Aorta (tissue), 5 donors: ENCODE measurements at regions of chrX and their contacts with region 1.

Region 1: DNA sequence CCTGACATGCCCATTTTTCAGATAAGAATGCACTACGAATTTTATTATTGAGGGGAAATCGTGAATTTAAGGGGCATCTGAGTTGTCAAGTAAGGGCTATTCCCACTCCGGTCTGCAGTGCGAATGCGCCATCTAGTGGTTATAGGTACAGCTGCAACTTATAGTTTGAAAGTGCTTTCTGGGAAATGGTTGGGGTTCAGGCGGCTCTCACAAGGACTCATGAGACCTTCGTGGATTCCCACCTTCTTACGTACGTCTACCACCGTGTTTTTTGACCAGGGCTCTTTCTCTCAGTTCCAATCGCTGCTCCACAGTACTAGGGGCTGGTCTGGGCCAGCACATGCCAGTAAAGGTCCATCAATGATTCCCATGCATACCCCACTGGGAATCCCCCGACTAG is 12.3 kb downstream of the MSL3 start:
- DNase-seq: no peak
- ATAC-seq: peak; percentile 68
- H3K4me3 ChIP-seq: no peak overlapping the region
- H3K27ac ChIP-seq: no peak overlapping the region
- H3K4me1 ChIP-seq: no peaks in the 10 kb centered on the region
- H3K27me3 ChIP-seq: no peaks in the 10 kb centered on the region

Region 2: DNA sequence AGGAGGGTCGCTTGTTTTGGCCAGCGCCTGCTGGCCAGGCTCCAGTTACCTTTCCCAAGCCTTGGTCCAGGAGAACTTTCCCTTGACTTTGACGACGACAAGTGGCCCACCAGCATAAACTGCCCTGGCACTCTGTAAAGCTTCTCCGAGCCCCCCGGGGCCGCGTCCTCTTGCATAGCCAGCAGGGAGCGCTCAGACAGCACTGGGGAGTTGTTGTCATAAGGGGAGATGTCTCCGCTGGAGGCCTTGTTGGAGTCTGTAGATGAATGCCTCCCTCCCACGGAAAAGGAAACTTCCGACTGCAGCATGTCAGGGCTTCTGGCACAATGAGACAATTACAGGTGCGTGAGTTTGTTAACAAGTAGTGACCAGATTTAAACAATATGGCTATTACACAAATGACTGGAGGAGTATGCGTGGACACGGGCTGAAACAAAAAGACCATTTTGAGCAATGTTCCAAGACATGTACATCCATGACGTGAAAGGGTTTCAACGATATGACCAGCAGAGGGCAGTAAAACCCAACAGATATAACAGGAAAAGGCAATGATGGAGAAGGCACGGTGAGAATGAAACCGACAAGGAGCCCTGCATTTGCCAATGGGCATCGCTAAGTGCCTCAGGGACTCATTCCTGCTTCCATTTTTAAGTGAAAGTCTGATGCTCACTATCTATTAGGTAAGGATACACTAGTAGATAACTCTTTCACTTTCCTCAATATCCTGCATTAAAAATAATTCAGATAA is 626.2 kb before region 1 on chrX:
- intact Hi-C with region 1: loop called (anchors 5 to 10 kb)
- DNase-seq: no peak
- ATAC-seq: peak; percentile 76
- H3K4me3 ChIP-seq: no peak overlapping the region
- H3K27ac ChIP-seq: no peak overlapping the region
- H3K4me1 ChIP-seq: no peaks in the 10 kb centered on the region
- H3K27me3 ChIP-seq: no peaks in the 10 kb centered on the region

Region 3: DNA sequence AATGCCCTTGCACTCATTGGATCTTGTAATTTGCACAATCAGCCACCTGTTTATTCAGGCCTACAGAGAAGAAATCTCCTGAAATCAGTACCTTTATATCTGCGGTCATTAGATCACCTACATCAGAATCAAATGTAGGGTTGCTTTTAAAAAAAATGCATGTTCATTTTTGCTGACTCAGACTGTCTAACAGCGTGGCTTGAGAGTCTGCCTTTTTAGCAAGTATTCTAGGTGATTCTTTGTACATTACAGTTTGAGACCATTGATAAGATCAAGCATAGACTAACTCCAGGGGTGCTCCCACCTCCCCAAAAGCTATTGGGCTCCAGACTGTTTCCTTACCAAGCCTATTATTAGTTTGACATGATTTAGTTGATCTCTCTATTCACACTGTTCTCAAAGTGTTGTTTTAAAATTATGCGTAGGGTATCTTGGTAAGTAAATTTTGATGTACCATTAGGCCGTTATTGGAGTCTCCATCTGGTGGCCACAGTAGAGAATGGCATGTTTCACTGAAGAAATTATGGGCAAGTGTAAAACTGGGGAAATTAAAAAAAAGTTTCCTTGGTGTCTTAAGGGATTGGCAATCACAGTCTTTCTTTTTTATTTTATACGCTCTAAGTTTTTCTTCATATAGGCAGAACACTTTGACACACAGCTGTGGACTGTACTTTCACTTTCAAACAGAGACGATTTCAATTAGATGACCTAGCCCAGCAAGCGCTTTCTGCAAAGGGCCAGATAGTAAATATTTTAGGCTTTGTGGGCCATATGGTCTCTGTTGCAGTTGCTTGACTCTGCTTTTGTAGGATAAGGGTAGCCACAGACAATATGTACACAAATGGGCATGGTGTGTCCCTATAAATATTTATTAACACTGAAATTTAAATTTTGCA is 46.0 kb before region 1 on chrX:
- intact Hi-C with region 1: loop called in 1 of 2 experiments (anchors 5 kb)
- DNase-seq: no peak
- ATAC-seq: peak; percentile 69
- H3K4me3 ChIP-seq: no peak overlapping the region
- H3K27ac ChIP-seq: no peak overlapping the region
- H3K4me1 ChIP-seq: no peaks in the 10 kb centered on the region
- H3K27me3 ChIP-seq: no peaks in the 10 kb centered on the region

Region 4: DNA sequence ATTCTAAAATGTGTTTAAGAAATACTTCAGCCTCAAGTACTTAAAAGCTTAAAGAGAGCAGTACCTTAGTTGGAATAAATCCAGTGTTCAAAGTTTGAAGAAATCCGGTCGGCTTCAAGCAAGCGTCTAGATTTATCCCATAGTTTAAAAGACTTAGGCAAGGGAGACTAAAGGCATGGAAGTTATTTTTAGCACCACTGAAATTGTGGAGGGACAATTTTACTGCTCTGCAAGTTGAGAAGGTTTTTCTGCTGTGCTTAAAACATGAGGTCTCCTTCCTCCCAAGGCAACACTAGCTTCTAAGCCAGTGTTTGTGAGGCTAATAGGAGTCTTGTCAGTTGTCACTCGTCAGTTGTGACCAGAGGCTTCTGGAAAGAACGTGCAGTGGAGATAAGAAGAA is 171.3 kb after region 1 on chrX:
- intact Hi-C with region 1: no loop called
- DNase-seq: no peak
- ATAC-seq: no peak
- H3K4me3 ChIP-seq: no peak overlapping the region
- H3K27ac ChIP-seq: no peak overlapping the region
- H3K4me1 ChIP-seq: no peaks in the 10 kb centered on the region
- H3K27me3 ChIP-seq: no peaks in the 10 kb centered on the region